Naive thymus-derived CD4-positive, alpha-beta T cell (primary cell): ENCODE measurements at regions of chr6 and their contacts with region 1.

Region 1: GRCh38 chr6:139323511-139324300 is 31.9 kb upstream of the TXLNB start:
- DNase-seq: peak; percentile 54 to 90 (median 86)
- ATAC-seq: peak; percentile 90
- H3K4me3 ChIP-seq: peak overlapping the region; percentile 64
- H3K4me3 Mint-ChIP-seq: peak overlapping the region; percentile 80 to 96 (median 90)
- H3K27ac ChIP-seq: peak overlapping the region; percentile 83
- H3K27ac Mint-ChIP-seq: peak overlapping the region; percentile 96 to 100 (median 99)
- H3K4me1 ChIP-seq: peaks cover 12 to 19% of the 10 kb centered on the region in 2 donors
- H3K4me1 Mint-ChIP-seq: peaks cover 19 to 44% (median 32%) of the 10 kb centered on the region in 7 donors
- H3K27me3 ChIP-seq: no peaks in the 10 kb centered on the region
- H3K27me3 Mint-ChIP-seq: no peaks in the 10 kb centered on the region

Region 2: GRCh38 chr6:139124887-139125672 is 198.6 kb before region 1 on chr6:
- CTCF ChIA-PET with region 1: interaction called, 7 read pairs
- POLR2A ChIA-PET with region 1: no interaction called
- intact Hi-C with region 1: loop called (anchors 1 to 2 kb)
- DNase-seq: peak in 8 of 9 donors; percentile 65 to 90 (median 84)
- ATAC-seq: peak; percentile 99
- H3K4me3 ChIP-seq: peak overlapping the region; percentile 31
- H3K4me3 Mint-ChIP-seq: peak overlapping the region; percentile 25 to 86 (median 68)
- H3K27ac ChIP-seq: peak overlapping the region; percentile 60
- H3K27ac Mint-ChIP-seq: peak overlapping the region; percentile 86 to 97 (median 94)
- H3K4me1 ChIP-seq: peaks cover 28 to 38% of the 10 kb centered on the region in 2 donors
- H3K4me1 Mint-ChIP-seq: peaks cover 19 to 65% (median 60%) of the 10 kb centered on the region in 7 donors
- H3K27me3 ChIP-seq: no peaks in the 10 kb centered on the region
- H3K27me3 Mint-ChIP-seq: no peaks in the 10 kb centered on the region

Region 3: DNA sequence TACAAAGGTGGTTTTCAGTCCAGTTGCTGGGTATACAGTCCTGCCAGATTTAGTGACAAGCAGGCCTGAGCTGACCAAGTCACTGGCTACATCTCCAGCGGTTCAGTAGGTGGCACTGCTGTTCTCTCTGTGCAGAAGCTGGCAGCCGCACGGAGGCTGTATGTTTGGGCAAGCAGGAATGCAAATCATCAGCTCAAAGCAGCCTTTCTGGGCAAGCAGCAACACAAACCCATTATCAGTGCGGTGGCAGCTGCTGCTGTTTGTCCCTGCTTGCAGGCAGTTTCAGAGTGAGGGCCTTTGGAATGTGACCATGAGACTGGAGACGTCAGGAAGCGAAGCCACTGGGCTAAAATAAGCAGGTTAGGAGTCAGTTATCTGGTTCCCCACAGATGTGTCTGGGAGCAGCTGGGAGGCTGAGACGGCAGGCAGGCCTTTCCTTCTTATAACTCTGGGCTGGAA is 104.4 kb before region 1 on chr6:
- CTCF ChIA-PET with region 1: interaction called, 6 read pairs
- POLR2A ChIA-PET with region 1: no interaction called
- intact Hi-C with region 1: loop called in 1 of 2 experiments (anchors 1 kb)
- DNase-seq: peak; percentile 39 to 76 (median 60)
- ATAC-seq: peak; percentile 100
- H3K4me3 ChIP-seq: no peak overlapping the region
- H3K4me3 Mint-ChIP-seq: peak overlapping the region in 8 of 10 donors; percentile 41 to 68 (median 58)
- H3K27ac ChIP-seq: no peak overlapping the region
- H3K27ac Mint-ChIP-seq: peak overlapping the region; percentile 49 to 92 (median 78)
- H3K4me1 ChIP-seq: peaks cover 5 to 10% of the 10 kb centered on the region in 2 donors
- H3K4me1 Mint-ChIP-seq: peaks cover 6 to 20% (median 12%) of the 10 kb centered on the region in 7 donors
- H3K27me3 ChIP-seq: no peaks in the 10 kb centered on the region
- H3K27me3 Mint-ChIP-seq: no peaks in the 10 kb centered on the region

Region 4: GRCh38 chr6:139262519-139263300 is 61.0 kb before region 1 on chr6:
- CTCF ChIA-PET with region 1: no interaction called
- POLR2A ChIA-PET with region 1: no interaction called
- intact Hi-C with region 1: loop called in 1 of 2 experiments (anchors 5 kb)
- DNase-seq: peak in 8 of 9 donors; percentile 24 to 56 (median 38)
- ATAC-seq: peak; percentile 85
- H3K4me3 ChIP-seq: peak overlapping the region; percentile 34
- H3K4me3 Mint-ChIP-seq: peak overlapping the region; percentile 45 to 85 (median 77)
- H3K27ac ChIP-seq: peak overlapping the region; percentile 14
- H3K27ac Mint-ChIP-seq: peak overlapping the region; percentile 62 to 89 (median 83)
- H3K4me1 ChIP-seq: peaks cover 7 to 10% of the 10 kb centered on the region in 2 donors
- H3K4me1 Mint-ChIP-seq: peaks cover 17 to 33% (median 25%) of the 10 kb centered on the region in 7 donors
- H3K27me3 ChIP-seq: no peaks in the 10 kb centered on the region
- H3K27me3 Mint-ChIP-seq: no peaks in the 10 kb centered on the region

Region 5: DNA sequence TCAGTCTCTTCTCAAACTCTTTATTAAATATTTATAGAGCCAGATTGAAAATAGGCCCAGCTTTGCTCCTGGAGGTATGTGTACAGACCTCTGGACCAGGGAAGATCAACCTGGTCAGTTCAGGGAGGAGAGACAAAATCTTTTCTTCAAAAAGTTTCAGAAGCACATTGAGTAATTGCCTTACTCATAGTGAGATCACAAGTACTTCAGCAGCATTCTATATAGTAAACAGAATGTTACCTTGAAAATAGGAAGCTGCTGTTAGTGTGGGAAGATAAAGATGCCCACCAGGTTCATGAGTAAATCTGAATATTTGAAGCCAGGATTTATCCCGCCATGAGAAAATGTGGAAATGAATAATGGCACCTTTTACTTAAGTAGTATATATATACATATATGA is 716.7 kb after region 1 on chr6:
- CTCF ChIA-PET with region 1: no interaction called
- POLR2A ChIA-PET with region 1: no interaction called
- intact Hi-C with region 1: no loop called
- DNase-seq: no peak
- ATAC-seq: peak; percentile 38
- H3K4me3 ChIP-seq: no peak overlapping the region
- H3K4me3 Mint-ChIP-seq: no peak overlapping the region
- H3K27ac ChIP-seq: no peak overlapping the region
- H3K27ac Mint-ChIP-seq: no peak overlapping the region
- H3K4me1 ChIP-seq: no peaks in the 10 kb centered on the region
- H3K4me1 Mint-ChIP-seq: peaks cover 0 to 2% (median 0%) of the 10 kb centered on the region in 7 donors
- H3K27me3 ChIP-seq: no peaks in the 10 kb centered on the region
- H3K27me3 Mint-ChIP-seq: peaks cover 0 to 20% (median 4%) of the 10 kb centered on the region in 5 donors